HepG2 (cell line): ENCODE measurements at regions of chr17 and their contacts with region 1.

Region 1: GRCh38 chr17:72556944-72557826 is 436.4 kb downstream of the SOX9 start:
- DNase-seq: peak; percentile 81
- ATAC-seq: peak; percentile 86
- H3K4me3 ChIP-seq: no peak overlapping the region
- H3K27ac ChIP-seq: no peak overlapping the region
- H3K4me1 ChIP-seq: peaks cover 23% of the 10 kb centered on the region
- H3K27me3 ChIP-seq: no peaks in the 10 kb centered on the region
- CTCF ChIP-seq: peak; percentile 97
- EP300 ChIP-seq: no peak
- POLR2A ChIP-seq: no peak
- RAD21 ChIP-seq: peak; percentile 96

Region 2: GRCh38 chr17:72539981-72540897 is 16.9 kb before region 1 on chr17:
- CTCF ChIA-PET with region 1: no interaction called
- POLR2A ChIA-PET with region 1: no interaction called
- in situ Hi-C with region 1: no loop called
- intact Hi-C with region 1: no loop called
- DNase-seq: peak; percentile 66
- ATAC-seq: peak; percentile 99
- H3K4me3 ChIP-seq: peak overlapping the region in 1 of 3 experiments; percentile 45; a peak in 3 of 6 replicates
- H3K27ac ChIP-seq: peak overlapping the region; percentile 30
- H3K4me1 ChIP-seq: peaks cover 80% of the 10 kb centered on the region
- H3K27me3 ChIP-seq: no peaks in the 10 kb centered on the region
- CTCF ChIP-seq: peak; percentile 93
- EP300 ChIP-seq: peak in 1 of 2 experiments; percentile 58; a peak in 2 of 4 replicates
- POLR2A ChIP-seq: no peak
- RAD21 ChIP-seq: peak; percentile 100

Region 3: GRCh38 chr17:72592242-72592966 is 35.2 kb after region 1 on chr17:
- CTCF ChIA-PET with region 1: interaction called, 7 read pairs
- POLR2A ChIA-PET with region 1: interaction called, 14 read pairs
- in situ Hi-C with region 1: no loop called
- intact Hi-C with region 1: loop called (anchors 1 kb)
- DNase-seq: peak; percentile 78
- ATAC-seq: peak; percentile 87
- H3K4me3 ChIP-seq: peak overlapping the region; percentile 93 to 99 (median 98)
- H3K27ac ChIP-seq: peak overlapping the region; percentile 58
- H3K4me1 ChIP-seq: peaks cover 39% of the 10 kb centered on the region
- H3K27me3 ChIP-seq: no peaks in the 10 kb centered on the region; a peak in 1 of 5 replicates
- CTCF ChIP-seq: peak; percentile 55
- EP300 ChIP-seq: peak; percentile 42 to 52; a peak in 2 of 4 replicates
- POLR2A ChIP-seq: peak; percentile 100
- RAD21 ChIP-seq: peak; percentile 83

Region 4: DNA sequence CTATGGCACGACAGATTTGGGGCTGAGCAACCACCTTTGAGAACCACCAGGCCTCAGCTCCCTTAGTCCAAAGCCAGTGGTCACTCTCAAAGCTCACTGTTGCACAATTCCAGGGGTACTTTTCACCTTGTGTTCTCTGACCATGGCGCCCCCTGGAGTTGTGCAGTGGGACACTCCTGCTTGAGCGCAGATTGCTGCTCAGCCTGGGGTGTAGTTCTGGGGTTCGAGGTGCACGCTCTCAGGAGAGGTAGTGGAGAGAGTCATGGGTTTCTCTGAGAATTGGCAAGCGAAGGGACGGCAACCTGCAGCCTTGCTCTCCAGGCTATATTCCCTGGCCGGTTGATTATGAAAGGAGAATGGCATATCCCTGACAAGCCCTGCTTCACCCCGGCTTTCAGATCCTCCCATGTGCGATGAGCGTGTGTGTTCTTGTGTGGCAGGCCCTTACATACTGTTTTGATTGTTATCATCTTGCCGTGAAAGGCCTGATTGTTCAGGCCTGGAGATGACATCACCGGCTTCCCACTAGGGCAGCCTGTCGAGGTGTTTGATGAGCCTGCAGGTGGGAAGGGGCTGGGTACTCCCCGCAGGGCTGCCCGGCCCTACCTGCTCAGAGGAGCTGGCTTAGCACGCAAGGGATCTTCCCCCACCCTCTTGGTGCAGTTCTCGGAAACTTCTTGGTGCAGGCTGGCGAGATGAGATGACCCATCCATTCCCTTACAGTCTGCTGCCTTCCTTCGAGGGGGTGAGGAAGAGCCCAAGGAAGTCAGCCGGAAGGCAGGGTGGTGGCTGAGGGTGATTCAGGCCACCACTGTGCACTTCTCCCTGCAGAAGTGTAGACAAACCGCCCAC is 104.1 kb after region 1 on chr17:
- CTCF ChIA-PET with region 1: interaction called, 7 read pairs
- POLR2A ChIA-PET with region 1: interaction called, 6 read pairs
- in situ Hi-C with region 1: loop called (anchors 5 kb)
- intact Hi-C with region 1: loop called (anchors 1 kb)
- DNase-seq: peak; percentile 98
- ATAC-seq: peak; percentile 89
- H3K4me3 ChIP-seq: peak overlapping the region in 1 of 3 experiments; percentile 36; a peak in 2 of 6 replicates
- H3K27ac ChIP-seq: peak overlapping the region; percentile 50
- H3K4me1 ChIP-seq: peaks cover 37% of the 10 kb centered on the region
- H3K27me3 ChIP-seq: no peaks in the 10 kb centered on the region
- CTCF ChIP-seq: peak; percentile 78
- EP300 ChIP-seq: peak in 1 of 2 experiments; percentile 78; a peak in 3 of 4 replicates
- POLR2A ChIP-seq: 0 out of 4 replicates have a peak, but pooled peaks of 1 of the 2 experiments have one; percentile 29
- RAD21 ChIP-seq: peak; percentile 46; the same call in 1 of the 2 replicates

Region 5: DNA sequence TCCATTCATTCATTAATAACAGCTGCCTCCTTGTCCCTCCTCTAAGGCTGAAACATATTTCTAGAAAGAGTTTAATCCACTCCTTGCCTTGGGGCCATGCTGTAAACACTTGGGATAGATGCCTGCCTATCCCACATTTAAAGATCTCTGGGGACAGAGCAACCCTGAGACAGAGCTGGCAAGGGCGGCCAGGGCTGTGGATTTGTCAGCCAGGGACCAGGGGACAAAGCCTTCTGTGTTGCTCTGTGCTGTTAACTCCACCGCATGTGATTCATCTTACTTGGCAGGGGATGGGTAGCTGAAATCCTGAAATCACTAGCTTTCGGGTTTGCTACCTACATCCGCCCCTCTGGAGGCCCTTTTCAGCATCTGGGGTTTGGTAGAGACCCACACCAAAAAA is 142.4 kb after region 1 on chr17:
- CTCF ChIA-PET with region 1: interaction called, 5 read pairs
- POLR2A ChIA-PET with region 1: no interaction called
- in situ Hi-C with region 1: no loop called
- intact Hi-C with region 1: loop called (anchors 5 kb)
- DNase-seq: no peak
- ATAC-seq: no peak
- H3K4me3 ChIP-seq: no peak overlapping the region
- H3K27ac ChIP-seq: no peak overlapping the region
- H3K4me1 ChIP-seq: peaks cover 46% of the 10 kb centered on the region
- H3K27me3 ChIP-seq: no peaks in the 10 kb centered on the region
- CTCF ChIP-seq: no peak
- EP300 ChIP-seq: no peak
- POLR2A ChIP-seq: no peak
- RAD21 ChIP-seq: no peak

Region 6: DNA sequence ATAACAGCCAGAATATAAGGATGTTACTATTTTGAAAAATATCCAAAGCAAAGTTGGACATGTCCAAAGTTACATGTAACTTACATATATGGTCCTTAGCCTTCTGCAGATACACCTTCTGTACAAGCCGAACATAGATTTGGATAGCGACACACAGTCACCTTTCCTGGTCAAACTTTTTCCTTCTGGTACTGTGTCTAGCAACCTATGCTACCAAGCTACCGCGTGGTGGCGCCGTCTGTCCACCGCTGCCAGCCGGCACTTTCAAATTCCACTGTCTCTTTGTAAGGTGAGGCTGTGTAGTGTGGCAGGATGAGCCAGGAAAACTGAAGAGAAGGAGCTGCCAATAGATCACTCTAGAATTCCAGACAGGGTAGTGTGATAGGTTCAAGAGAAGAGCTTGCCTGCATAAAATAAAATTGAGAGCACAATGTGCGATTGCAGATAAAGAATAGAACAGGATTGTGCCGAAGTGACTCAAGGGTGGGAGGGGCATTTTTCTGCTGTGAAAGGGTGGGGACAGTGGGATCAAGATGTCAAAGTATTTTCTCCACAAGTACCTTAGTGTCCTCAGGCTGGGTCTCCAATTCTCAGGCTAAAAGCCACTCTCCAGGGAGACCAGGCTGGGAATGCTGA is 168.4 kb after region 1 on chr17:
- CTCF ChIA-PET with region 1: interaction called, 26 read pairs
- POLR2A ChIA-PET with region 1: interaction called, 5 read pairs
- in situ Hi-C with region 1: no loop called
- intact Hi-C with region 1: loop called (anchors 1 kb)
- DNase-seq: peak; percentile 66
- ATAC-seq: peak; percentile 87
- H3K4me3 ChIP-seq: no peak overlapping the region
- H3K27ac ChIP-seq: no peak overlapping the region
- H3K4me1 ChIP-seq: peaks cover 14% of the 10 kb centered on the region
- H3K27me3 ChIP-seq: no peaks in the 10 kb centered on the region
- CTCF ChIP-seq: peak; percentile 98
- EP300 ChIP-seq: 0 out of 4 replicates have a peak, but pooled peaks of 1 of the 2 experiments have one; percentile 19
- POLR2A ChIP-seq: no peak
- RAD21 ChIP-seq: peak; percentile 98

Region 7: GRCh38 chr17:72985881-72986720 is 428.9 kb after region 1 on chr17:
- CTCF ChIA-PET with region 1: no interaction called
- POLR2A ChIA-PET with region 1: no interaction called
- in situ Hi-C with region 1: no loop called
- intact Hi-C with region 1: loop called (anchors 5 kb)
- DNase-seq: peak; percentile 79
- ATAC-seq: peak; percentile 97
- H3K4me3 ChIP-seq: no peak overlapping the region
- H3K27ac ChIP-seq: no peak overlapping the region
- H3K4me1 ChIP-seq: peaks cover 26% of the 10 kb centered on the region
- H3K27me3 ChIP-seq: no peaks in the 10 kb centered on the region
- CTCF ChIP-seq: peak; percentile 92
- EP300 ChIP-seq: no peak
- POLR2A ChIP-seq: no peak
- RAD21 ChIP-seq: peak; percentile 95

Region 8: DNA sequence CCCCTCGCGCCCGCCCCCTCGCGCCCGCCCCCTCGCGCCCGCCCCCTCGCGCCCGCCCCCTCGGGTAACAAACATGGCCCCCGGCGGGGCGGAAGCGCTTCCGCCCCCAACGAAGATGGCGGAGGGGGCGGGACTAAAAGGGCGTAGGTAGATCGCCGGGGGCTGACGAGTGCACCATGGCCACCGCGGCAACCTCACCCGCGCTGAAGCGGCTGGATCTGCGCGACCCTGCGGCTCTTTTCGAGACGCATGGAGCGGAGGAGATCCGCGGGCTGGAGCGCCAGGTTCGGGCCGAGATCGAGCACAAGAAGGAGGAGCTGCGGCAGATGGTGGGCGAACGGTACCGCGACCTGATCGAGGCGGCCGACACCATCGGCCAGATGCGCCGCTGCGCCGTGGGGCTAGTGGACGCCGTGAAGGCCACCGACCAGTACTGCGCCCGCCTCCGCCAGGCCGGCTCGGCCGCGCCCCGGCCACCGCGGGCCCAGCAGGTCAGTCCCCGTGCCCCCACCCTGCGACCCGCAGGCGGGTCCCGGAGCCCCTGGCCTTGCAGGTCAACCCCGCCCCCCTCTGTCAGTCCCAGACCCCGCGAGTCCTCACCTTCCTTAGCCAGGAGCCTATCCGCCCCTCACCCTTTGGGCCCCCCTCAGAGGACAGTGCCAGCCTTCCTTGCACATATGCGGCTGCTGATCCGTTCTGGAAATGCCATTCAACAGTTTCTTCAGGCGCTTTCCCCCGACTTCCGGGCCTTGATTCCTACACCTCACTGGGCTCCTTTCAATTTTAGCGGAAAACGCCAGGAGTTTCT is 635.9 kb after region 1 on chr17 and contains the start of gene COG1:
- CTCF ChIA-PET with region 1: no interaction called
- POLR2A ChIA-PET with region 1: interaction called, 3 read pairs
- in situ Hi-C with region 1: no loop called
- intact Hi-C with region 1: loop called (anchors 2 kb)
- DNase-seq: peak; percentile 81
- ATAC-seq: peak; percentile 77
- H3K4me3 ChIP-seq: peak within 1 kb of the TSS; percentile 84 to 100 (median 90)
- H3K27ac ChIP-seq: peak within 1 kb of the TSS; percentile 95
- H3K4me1 ChIP-seq: peaks cover 61% of the 10 kb centered on the region
- H3K27me3 ChIP-seq: no peaks in the 10 kb centered on the region; a peak in 1 of 5 replicates
- CTCF ChIP-seq: 0 out of 2 replicates have a peak, but pooled peaks have one; percentile 22
- EP300 ChIP-seq: 0 out of 4 replicates have a peak, but pooled peaks of 1 of the 2 experiments have one; percentile 11
- POLR2A ChIP-seq: peak; percentile 71 to 89
- RAD21 ChIP-seq: peak; percentile 57; the same call in 1 of the 2 replicates
- total RNA-seq, gene COG1: 30.4 and 36.6 TPM in 2 replicates